HEK293T (cell line): ENCODE measurements at regions of chr1 and their contacts with region 1.

Region 1: DNA sequence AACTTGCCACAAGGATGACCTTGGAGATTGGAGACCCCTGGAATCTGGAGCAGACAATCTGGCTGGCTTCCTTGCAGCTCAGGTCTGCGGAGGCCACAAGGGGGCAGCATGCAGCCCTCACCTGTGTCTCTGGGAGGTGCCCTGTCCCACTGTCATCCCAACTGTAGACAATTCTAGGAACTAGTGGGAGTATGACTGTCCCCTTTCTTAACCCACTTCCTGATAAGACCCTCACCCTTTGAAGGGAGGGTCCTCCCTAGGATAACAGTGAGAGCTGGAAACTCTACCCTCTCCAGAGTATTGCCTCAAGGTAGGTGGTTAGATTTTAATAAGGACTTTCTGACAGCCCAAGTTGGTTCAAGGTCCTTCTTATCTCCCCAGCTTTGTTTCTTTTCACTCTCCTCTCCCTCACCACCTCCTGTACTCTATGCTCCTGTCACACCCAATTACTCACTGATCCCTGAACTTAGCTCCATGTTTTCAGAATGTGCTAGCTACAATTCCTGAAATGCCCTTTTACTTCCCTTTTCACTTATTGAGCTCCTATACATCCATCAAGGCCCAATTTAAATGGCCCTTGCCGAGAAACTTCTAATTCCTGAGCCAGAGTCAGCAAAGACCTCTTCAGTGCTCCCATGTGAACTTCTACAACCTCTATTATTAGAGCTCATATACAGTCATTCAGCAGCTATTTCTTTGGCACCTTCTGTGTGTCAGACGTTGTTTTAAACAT is 9.2 kb upstream of the KCNQ4 start:
- DNase-seq: peak; percentile 75

Region 2: DNA sequence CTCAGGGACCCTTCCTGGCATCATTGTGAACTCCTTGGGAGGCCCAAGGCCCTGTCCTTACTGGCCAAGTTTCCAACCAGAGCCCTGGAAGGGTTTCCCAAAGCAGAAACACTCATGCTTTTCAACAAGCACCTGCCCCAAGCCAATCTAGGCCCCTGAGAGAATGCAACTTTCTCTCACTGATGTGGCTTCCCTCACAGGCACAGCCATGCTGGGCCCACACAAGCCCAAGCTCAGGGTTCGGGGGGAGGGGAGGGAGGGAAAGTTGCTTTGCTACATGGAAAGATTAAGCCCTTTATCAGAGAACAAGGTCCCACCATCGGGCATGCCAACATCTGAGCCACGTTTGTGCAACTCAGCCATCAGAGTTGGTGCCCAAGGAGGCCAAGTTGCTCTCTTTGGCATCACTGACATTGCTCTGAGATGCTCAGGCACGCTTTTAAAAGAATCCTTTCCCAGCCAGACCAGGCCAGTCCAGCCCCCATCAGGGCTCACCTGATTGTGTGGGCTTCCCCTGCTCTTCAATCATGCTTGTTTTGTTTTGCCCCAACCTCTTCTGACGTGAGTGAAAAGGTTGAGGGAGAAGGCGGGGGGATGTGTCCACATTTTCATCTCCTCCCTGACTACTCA is 152.5 kb before region 1 on chr1:
- CTCF ChIA-PET with region 1: no interaction called
- POLR2A ChIA-PET with region 1: no interaction called
- DNase-seq: no peak

Region 3: DNA sequence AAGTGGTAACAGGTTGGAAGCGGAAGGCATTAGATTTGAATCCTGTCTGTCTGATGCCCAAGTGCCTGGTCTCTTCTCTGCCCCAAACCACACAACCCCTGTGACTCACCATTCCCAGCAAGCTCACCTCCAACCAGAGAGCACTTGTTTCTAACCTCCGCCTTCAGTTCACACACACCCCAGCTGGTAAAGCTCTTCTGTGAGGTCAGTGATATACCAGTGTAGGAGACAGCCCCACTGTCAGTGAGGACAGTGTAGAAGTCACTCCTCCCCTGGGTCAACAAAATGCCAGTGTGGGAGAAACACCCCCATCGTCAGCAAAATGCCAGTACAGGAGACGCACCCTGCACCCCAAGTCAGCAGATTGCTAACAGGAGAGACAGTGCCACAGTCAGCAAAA is 111.6 kb before region 1 on chr1:
- CTCF ChIA-PET with region 1: no interaction called
- POLR2A ChIA-PET with region 1: no interaction called
- DNase-seq: no peak

Region 4: GRCh38 chr1:40703316-40703715 is 71.1 kb before region 1 on chr1:
- CTCF ChIA-PET with region 1: no interaction called
- POLR2A ChIA-PET with region 1: no interaction called
- DNase-seq: no peak

Region 5: GRCh38 chr1:40732756-40733301 is 41.6 kb before region 1 on chr1:
- CTCF ChIA-PET with region 1: interaction called, 12 read pairs
- POLR2A ChIA-PET with region 1: no interaction called
- DNase-seq: no peak

Region 6: DNA sequence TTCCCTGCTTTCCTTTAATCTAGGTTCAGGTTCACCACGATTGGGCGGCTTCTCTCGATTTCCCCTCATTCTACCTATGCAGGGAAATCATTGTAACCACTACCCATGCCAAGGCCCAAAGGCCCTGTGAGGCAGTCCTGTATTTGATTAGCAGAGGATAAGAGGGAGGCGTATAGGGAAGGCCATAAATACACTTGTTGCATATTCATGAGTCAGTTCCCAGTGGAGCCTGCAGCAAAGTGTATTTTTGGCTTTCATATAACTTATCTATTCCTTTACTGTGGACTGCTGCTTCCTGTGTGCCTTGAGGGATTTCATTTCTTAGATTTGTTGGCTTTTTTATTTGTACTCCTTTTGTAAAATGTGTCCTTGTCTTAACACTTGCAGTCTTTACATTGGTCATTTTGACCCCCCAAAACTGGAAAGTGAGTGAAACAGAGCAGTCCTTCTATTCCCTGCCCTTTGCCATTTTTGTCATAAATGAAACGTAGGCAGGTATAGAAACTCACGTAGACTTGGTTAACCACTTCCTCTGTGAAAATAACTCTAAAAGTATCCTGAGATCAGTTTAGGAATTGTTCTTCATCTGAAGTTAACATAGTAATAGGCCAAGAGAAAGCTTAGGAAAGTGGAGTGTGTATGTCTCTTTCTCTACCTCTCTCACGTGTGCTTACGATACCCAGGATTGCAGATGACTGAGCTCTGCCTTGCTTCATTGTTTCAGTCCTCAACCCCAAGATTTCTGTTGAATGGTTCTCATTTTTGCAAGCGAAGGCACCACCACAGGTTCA is 10.5 kb before region 1 on chr1:
- CTCF ChIA-PET with region 1: interaction called, 32 read pairs
- POLR2A ChIA-PET with region 1: no interaction called
- DNase-seq: no peak

Region 7: DNA sequence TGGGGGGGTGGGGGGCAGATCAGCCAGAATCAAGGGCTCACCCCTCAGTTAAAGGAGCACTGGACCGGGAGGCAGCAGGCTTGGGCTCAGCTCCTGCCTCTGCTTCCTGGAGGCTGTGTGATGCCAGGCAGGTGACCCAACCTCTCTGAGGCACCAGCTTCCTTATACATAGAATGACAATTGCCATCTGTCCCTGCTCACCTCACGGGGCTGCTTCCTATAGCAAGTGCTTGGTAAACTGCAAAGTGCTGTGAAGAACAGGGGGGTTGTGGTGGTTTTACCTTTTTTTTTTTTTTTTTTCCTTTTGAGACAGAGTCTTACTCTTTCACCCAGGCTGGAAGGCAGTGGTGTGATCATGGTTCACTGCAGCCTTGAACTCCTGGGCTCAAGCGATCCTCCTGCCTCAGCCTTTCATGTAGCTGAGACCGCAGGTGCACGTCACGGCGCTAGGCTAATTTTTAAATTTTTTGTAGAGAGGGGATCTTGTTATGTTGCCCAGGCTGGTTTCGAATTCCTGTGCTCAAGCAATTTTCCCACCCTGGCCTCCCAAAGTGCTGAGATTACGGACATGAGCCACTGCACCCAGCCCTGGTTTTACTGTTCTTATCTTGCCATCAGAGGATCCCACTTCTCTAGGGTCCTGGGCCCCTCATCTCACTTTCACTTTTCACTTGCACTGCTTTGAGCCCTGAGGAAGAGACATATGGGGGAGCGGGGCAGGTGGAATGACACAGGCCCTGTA is 20.7 kb after region 1 on chr1:
- CTCF ChIA-PET with region 1: interaction called, 11 read pairs
- POLR2A ChIA-PET with region 1: no interaction called
- DNase-seq: no peak

Region 8: DNA sequence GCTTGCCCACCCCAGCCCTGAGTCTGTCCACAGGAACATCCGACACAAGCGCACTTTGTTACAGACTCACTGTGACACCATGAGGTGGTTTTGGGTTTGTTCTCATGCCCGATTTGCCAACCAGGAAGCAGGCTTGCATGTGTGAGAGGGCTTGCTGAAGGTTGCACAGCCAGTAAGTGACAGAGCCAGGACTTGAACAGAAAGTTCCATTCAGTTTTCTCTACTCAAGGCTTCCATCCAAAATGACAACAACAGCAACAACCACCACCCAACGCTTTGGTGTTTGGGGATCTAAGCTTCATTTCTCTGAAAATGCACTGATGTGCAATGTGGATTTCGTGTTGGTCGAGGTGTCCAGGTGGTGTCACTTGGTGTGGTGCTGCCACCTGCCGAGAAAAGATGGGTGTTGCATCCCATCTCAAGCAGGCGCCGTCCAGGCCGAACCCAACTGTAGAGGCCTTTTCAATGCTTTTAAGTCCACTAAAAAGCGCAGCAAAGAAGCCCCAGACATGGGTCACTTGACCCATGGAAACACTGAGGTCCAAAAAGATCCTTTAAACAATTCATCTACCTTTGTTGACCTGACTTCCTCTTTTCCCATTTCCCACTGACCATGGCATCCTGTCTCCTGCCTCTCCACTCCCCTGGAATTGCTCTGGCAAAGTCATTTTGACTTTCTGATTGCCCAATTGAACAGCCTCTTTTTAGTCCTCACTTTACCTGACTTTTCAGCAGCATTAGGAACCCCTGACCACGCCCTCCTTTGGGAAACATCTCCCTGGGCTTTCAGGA is 75.6 kb after region 1 on chr1:
- CTCF ChIA-PET with region 1: interaction called, 28 read pairs
- POLR2A ChIA-PET with region 1: no interaction called
- DNase-seq: peak; percentile 79

Region 9: DNA sequence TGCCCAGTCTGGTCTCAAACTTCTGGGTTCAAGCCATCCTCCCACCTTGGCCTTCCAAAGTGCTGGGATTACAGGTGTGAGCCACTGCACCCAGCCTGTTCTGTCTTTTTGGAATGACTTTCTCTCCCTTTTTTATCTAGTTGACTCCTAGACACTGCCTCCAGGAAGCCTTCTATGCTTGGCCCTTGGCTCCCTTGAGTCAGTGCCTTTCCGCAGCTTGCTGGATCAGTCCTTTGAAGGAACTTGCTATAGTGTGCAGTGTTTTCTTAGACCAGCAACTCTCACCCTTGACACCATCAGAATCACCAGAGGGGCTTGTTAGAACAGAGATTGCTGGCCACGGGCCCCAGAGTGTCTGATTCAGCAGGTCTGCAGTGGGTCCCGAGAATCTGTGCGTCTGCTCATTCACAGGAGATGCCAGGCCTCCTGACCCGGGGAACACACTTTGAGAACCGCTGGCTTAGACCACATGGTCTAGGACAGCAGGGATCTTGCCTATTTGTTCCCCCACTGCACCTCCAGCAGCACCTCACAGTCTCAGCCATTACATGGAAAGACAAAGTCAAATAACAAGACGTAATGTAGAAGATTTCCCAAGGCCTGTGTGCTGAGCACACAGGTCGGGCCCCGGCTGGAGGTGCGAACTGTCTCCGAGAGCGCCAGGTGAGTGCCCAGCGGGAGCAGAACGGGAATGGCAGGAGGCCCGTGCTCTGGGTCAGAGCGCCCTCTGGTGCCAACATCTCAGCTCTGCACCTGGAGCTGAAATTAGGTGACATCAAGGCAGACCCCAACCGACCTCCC is 177.7 kb after region 1 on chr1:
- CTCF ChIA-PET with region 1: interaction called, 11 read pairs
- POLR2A ChIA-PET with region 1: no interaction called
- DNase-seq: peak; percentile 87